ENCODE measurements at regions of chr7 and their contacts with region 1.

Region 1: GRCh38 chr7:2555121-2556052 is at the start of gene BRAT1:
- DNase-seq: peak; percentile 92 to 99 (median 97)

Region 2: GRCh38 chr7:2431260-2431867 is 124.0 kb before region 1 on chr7:
- intact Hi-C with region 1: no loop called
- DNase-seq: no peak

Region 3: GRCh38 chr7:2523941-2524807 is 31.2 kb before region 1 on chr7:
- intact Hi-C with region 1: loop called (anchors 5 kb)
- DNase-seq: peak; percentile 84 to 98 (median 92)

Region 4: GRCh38 chr7:2632733-2633537 is 77.5 kb after region 1 on chr7:
- intact Hi-C with region 1: loop called (anchors 10 kb)
- DNase-seq: peak in 34 of 42 donors; percentile 44 to 85 (median 62)

Region 5: DNA sequence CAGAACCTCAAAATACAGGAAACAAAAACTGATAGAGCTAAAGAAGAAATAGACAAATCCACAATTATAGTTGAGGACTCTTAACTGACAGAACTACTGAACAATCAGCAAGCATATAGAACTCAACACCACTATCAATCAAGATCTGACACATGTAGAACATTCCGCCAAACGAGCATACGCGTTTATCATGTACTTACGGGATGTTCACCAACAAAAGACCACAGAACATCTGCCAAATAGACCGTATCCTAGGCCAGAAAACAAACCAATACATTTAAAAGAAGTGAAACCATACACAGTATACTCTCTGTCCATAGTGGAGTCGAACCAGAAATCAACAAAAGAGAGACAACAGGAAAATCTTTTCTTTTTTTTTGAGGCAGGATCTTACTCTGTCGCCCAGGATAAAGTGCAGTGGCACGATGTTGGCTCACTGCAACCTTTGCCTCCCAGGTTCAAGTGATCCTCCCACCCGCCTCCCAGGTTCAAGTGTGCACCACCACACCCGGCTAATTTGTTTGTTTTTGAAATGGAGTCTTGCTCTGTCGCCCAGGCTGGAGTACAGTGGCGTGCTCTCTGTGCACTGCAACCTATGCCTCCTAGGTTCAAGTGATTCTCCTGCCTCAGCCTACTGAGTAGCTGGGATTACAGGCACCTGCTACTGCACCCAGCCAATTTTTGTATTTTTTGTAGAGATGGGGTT is 283.6 kb after region 1 on chr7:
- intact Hi-C with region 1: no loop called
- DNase-seq: no peak